KBM-7 (cell line): ENCODE measurements at regions of chr2 and their contacts with region 1.

Region 1: DNA sequence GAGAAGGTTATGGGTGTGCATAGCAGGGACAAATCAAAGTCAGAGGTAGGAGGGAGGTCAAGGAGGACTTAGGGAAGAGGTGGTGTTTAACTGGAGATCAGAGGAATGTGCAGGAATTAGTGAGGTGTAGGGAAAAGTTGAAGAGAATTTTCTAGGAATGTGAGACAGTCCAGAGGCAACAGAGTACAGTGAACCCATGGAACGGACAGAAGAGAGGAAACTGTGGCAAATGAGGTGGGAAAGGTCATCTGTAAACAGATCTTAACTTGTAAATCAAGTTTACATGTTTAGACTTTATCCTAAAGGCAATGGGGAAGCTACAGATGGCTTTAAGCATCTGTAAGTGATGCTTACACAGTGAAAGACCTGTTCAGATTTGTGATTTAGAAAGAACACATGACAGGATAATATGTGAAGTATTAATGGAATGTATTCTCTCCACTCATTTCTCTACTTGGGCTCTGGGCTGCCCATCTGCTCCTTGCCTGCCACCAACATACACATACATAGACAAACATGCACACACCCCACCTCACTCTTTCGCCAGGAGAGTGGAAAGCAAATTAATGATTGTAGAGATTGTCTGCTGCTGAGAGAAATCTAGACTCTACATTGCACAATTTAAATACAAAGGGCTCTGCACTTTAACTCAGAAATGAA is 60.9 kb upstream of the NFE2L2 start:
- DNase-seq: no peak

Region 2: DNA sequence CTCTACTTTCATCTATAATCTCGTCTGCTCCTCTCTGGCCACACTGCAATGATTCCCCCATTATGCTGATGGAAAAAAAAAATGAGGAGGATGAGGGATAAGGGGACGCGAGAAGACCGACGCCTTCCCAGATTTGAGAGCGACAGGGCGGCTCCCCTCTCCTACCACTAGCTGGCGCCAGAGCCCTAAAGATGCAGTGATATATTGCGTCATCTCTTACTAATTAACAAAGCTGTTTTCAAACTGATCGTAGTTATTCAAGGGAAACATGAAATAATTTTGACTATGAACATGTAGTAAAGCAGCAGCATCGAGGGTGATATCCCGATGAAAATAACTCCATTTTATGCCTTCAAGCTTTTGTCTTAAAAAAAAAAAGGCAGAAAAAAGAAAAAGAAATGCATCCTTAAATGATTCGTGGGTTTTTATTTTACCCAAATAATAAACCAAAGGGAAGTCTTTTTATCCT is 160.8 kb before region 1 on chr2:
- in situ Hi-C with region 1: loop called (anchors 10 kb)
- DNase-seq: peak; percentile 86

Region 3: GRCh38 chr2:178072383-178073301 is 747.2 kb after region 1 on chr2 and contains the start of gene PDE11A:
- in situ Hi-C with region 1: no loop called
- DNase-seq: peak; percentile 73